ENCODE measurements at regions of chr7 and their contacts with region 1.

Region 1: DNA sequence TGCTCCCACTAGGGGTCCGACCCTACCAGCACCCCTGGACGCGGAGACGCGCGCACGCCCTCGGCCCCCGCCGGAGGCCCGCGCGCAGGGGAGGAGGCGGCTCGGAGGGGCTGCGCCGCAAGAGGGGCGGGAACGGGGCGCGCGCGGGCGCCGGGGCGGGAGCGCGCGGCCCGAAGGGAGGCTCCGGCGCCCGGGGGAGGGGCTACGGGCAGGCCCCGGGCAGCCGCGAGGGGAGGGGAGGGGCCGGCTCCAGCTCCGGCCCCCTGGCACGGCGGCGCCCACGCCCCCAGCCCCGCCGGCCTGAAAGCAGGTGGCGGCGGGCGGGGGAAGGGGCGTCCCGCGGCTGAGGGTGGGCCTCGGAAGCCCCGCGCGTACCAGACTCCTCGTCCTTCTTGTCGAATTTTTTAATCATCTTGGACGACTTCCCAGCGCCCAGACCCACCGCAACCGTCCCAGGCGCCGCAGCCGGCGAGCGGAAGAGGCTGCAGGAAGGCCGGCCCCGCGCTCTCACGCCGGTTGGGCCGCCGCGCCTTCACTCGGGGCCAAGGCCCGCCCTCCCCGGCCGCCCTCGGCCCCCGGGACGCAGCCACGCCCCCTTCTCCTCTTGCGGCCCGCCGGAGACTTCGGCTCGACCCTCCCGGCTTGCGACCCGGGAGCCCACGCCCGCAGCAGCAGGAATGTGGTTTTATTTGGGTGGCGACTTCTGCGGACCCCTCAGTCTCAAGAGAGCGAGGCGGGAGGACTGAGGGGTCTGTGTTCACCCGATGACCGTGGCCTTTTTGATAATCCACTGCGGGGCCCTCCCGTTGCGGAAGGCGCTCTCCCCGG is at the start of gene COPG2:
- DNase-seq: peak; percentile 92
- ATAC-seq: peak; percentile 91
- H3K4me3 ChIP-seq: peak within 1 kb of the TSS; percentile 69 to 83 (median 74)
- H3K4me3 Mint-ChIP-seq: peak within 1 kb of the TSS; percentile 96
- H3K27ac ChIP-seq: peak within 1 kb of the TSS in 1 of 2 donors; percentile 66
- H3K27ac Mint-ChIP-seq: peak within 1 kb of the TSS; percentile 90
- H3K4me1 ChIP-seq: peaks cover 10 to 11% of the 10 kb centered on the region in 2 donors
- H3K4me1 Mint-ChIP-seq: peaks cover 15% of the 10 kb centered on the region
- H3K27me3 ChIP-seq: no peaks in the 10 kb centered on the region
- H3K27me3 Mint-ChIP-seq: peaks cover 11% of the 10 kb centered on the region
- CTCF ChIP-seq: no peak
- total RNA-seq, gene COPG2: 13.4 and 14.7 TPM in 2 replicates

Region 2: DNA sequence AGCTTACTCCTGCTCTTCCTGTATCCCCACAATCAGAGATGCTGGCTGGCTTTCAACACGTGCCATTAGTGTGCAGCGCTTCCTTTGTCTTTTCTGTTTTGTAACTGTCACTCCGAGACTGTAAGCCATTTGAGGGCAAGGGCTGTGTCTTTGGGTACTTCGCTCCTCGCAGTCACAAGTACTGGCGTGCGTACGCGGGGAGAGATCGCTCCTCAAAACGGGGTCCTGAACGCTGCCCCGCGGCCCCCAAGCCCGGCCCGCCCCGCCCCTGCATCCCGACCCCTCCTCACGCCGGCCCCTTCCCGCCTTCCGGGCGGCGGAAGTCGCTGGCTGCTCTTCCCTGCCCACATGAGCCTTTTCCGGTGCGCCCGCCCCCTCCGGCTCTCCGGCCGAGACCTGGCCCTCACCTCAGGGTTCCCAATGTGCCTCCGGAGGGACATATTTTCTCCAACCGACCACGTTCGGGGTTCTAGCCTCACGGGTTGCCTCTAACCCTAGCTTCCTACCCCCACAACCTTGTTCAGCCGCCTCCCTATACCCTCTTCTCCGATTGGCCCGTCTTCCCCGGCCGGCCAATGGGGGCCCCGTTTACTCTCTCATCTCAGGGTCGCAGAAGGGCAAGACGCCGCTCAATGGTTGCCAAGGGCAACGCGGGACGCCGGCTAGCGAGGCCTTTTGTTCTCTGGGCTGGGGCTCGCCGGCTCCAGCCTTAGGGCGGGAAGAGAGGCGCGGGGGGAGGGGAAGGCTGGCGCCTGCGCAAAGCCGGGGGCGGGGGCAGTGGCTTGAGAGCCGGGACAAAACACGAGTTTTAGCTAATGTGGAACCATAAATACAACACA is 227.7 kb before region 1 on chr7 and contains the start of gene CEP41:
- CTCF ChIA-PET with region 1: no interaction called
- POLR2A ChIA-PET with region 1: no interaction called
- intact Hi-C with region 1: loop called (anchors 2 kb)
- DNase-seq: peak; percentile 93
- ATAC-seq: peak; percentile 97
- H3K4me3 ChIP-seq: peak within 1 kb of the TSS; percentile 26 to 90 (median 87)
- H3K4me3 Mint-ChIP-seq: peak within 1 kb of the TSS; percentile 99
- H3K27ac ChIP-seq: peak within 1 kb of the TSS; percentile 66 to 68
- H3K27ac Mint-ChIP-seq: peak within 1 kb of the TSS; percentile 96
- H3K4me1 ChIP-seq: peaks cover 4 to 10% of the 10 kb centered on the region in 2 donors
- H3K4me1 Mint-ChIP-seq: peaks cover 13% of the 10 kb centered on the region
- H3K27me3 ChIP-seq: no peaks in the 10 kb centered on the region
- H3K27me3 Mint-ChIP-seq: peaks cover 6% of the 10 kb centered on the region
- CTCF ChIP-seq: no peak
- total RNA-seq, gene CEP41: 5.9 and 6.1 TPM in 2 replicates

Region 3: GRCh38 chr7:130486114-130486958 is 182.1 kb before region 1 on chr7:
- CTCF ChIA-PET with region 1: no interaction called
- POLR2A ChIA-PET with region 1: no interaction called
- intact Hi-C with region 1: loop called (anchors 5 kb)
- DNase-seq: peak; percentile 77
- ATAC-seq: peak; percentile 89
- H3K4me3 ChIP-seq: peak overlapping the region in 4 of 5 experiments; percentile 52 to 73 (median 66)
- H3K4me3 Mint-ChIP-seq: peak overlapping the region; percentile 93
- H3K27ac ChIP-seq: no peak overlapping the region
- H3K27ac Mint-ChIP-seq: peak overlapping the region; percentile 74
- H3K4me1 ChIP-seq: peaks cover 22 to 24% of the 10 kb centered on the region in 2 donors
- H3K4me1 Mint-ChIP-seq: peaks cover 26% of the 10 kb centered on the region
- H3K27me3 ChIP-seq: peaks cover 0 to 32% (median 19%) of the 10 kb centered on the region in 4 experiments
- H3K27me3 Mint-ChIP-seq: peaks cover 53% of the 10 kb centered on the region
- CTCF ChIP-seq: peak; percentile 93

Region 4: DNA sequence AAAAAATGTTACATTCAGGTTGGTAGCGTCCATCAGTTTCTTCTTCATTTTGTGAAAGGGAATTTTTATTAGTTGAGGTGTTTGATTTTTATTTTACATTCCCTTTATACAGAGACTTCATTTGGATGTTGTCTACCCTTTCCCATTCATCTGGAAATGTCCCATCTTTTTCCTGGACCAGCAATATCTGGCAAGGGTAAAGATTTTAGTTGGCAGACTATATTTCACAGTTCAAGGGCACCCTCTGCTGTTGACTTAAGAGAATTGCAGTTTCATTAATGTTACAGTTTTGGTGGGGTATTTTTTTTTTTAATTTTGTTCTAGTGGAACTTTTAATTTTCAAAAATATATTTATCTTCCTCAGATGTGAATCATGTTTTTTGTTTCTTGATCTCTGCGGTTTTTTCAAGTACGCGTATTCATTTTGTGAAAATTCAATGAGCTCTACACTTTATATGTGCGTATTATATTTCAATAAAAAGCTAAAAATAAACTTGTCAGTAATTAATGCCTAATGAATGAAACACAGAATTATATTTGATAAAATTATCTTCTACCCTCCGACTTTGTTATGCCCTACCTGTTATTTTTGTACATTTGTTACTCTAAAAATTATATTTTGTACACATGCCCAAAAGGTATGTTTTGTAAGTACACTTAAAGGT is 163.5 kb after region 1 on chr7:
- CTCF ChIA-PET with region 1: no interaction called
- POLR2A ChIA-PET with region 1: no interaction called
- intact Hi-C with region 1: no loop called
- DNase-seq: peak; percentile 58
- ATAC-seq: no peak
- H3K4me3 ChIP-seq: no peak overlapping the region
- H3K4me3 Mint-ChIP-seq: no peak overlapping the region
- H3K27ac ChIP-seq: no peak overlapping the region
- H3K27ac Mint-ChIP-seq: no peak overlapping the region
- H3K4me1 ChIP-seq: no peaks in the 10 kb centered on the region
- H3K4me1 Mint-ChIP-seq: no peaks in the 10 kb centered on the region
- H3K27me3 ChIP-seq: peaks cover 0 to 3% (median 0%) of the 10 kb centered on the region in 4 experiments
- H3K27me3 Mint-ChIP-seq: peaks cover 7% of the 10 kb centered on the region
- CTCF ChIP-seq: peak; percentile 94